ENCODE measurements at regions of chr2 and their contacts with region 1.

Region 1: DNA sequence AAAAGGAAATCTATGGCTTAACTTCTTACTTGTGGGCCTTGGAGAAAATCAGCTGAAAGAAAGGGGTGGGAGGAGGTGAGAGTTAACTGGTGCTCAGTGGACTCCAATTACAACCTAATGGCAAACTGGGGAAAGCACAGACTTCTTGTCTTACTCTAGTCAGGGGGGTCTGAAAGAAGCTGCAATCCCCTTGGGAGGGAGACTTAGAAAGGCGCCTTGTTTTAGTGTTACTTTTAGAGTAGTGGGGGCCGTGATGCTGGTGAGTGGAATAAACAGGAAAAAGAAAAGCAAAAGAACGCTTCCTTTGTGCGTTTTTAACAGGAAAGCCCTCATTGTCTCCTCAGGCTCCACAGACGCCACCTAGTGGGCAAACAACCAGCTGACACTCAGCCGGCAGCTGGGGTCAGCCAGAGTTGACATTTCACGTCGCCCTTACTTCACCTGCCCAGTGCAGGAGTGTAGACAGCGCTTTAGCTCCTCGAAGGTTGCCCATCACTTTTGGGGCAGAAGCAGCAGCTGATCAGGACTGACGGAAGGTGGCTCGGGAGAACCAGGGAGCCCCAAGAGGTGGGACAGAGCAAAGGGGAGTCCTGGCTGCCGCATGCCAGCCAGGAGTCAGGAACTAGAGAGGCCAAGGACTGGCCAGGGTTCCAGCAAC is 55.9 kb upstream of the GORASP2 start:
- DNase-seq: peak; percentile 86
- ATAC-seq: peak; percentile 98
- H3K4me3 Mint-ChIP-seq: peak overlapping the region; percentile 49
- H3K27ac Mint-ChIP-seq: peak overlapping the region; percentile 60
- H3K4me1 Mint-ChIP-seq: peaks cover 10% of the 10 kb centered on the region
- H3K27me3 Mint-ChIP-seq: peaks cover 3% of the 10 kb centered on the region
- CTCF ChIP-seq: peak; percentile 95

Region 2: DNA sequence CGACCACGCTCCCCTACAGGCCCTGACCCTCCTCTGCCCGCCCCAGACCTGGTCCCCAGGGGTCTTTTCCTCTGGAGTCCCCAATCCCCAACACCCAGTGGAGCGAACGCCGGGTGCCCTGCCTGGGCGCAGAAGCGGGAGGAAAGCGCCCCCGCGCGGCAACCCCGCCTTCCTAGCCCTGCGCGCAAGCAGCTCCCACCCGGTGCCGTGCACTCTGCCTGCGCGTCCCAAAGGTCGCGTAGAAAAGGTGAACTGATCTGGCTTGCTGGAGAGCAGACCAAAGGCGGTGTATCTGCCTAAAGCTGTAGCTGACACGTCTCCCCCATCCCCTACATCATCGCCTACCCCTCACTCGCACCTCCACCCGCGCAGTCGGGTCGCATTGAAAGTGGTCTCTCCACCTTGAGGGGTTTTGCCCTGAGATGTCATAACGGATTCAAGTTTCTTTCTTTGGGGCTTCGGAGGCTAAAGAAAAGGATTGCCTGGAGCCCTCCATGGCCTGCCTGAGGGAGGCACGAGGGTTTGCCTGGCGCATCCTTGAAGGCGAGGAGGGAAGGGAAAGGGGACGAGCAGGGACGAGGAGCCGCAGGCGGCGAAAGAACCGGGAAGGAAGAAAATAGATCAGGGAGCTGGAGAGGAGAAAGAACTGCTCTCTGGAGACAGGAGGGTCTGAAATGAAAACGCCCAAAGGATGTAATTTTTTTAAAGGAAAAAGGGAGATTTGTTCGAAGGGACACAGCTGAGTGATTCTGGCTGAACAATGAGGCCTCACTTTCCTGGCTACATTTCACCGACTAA is 50.7 kb before region 1 on chr2:
- CTCF ChIA-PET with region 1: interaction called, 11 read pairs
- POLR2A ChIA-PET with region 1: no interaction called
- intact Hi-C with region 1: loop called (anchors 2 kb)
- DNase-seq: peak; percentile 65
- ATAC-seq: peak; percentile 63
- H3K4me3 Mint-ChIP-seq: peak overlapping the region; percentile 48
- H3K27ac Mint-ChIP-seq: no peak overlapping the region
- H3K4me1 Mint-ChIP-seq: peaks cover 37% of the 10 kb centered on the region
- H3K27me3 Mint-ChIP-seq: peaks cover 75% of the 10 kb centered on the region
- CTCF ChIP-seq: no peak

Region 3: GRCh38 chr2:170843656-170844055 is 29.5 kb before region 1 on chr2:
- CTCF ChIA-PET with region 1: interaction called, 73 read pairs
- POLR2A ChIA-PET with region 1: interaction called, 3 read pairs
- intact Hi-C with region 1: no loop called
- DNase-seq: peak; percentile 39
- ATAC-seq: peak; percentile 79
- H3K4me3 Mint-ChIP-seq: no peak overlapping the region
- H3K27ac Mint-ChIP-seq: peak overlapping the region; percentile 16
- H3K4me1 Mint-ChIP-seq: peaks cover 21% of the 10 kb centered on the region
- H3K27me3 Mint-ChIP-seq: peaks cover 10% of the 10 kb centered on the region
- CTCF ChIP-seq: no peak

Region 4: DNA sequence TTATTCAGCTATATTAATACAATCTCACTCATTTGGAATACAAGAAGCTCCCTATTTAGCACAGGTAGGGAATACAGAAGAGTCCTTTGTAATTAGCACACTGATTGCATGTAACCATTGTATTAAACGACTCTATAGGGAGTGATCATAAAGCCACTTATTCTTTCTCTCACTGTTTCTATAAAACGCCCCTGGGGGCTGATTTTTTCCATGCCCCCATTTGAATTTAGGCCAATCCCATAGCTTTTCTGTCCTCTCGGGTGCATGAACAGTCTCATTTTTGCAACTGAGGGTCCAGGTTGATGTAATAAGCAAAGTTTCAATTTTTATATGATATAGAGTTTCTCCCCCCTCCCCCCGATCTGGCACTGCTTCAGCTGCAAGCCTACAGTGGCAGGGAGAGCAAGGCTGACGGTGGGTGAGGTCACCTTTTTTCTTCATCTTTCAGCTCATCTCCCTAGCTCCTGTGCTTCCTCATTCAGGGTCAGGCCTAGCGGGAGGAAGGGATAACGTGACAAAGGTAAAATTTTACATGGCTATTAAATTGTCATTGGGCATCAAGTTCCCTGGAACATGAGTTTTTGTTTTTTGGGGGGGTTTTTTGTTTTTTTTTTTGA is 10.8 kb before region 1 on chr2:
- CTCF ChIA-PET with region 1: interaction called, 18 read pairs
- POLR2A ChIA-PET with region 1: interaction called, 4 read pairs
- intact Hi-C with region 1: no loop called
- DNase-seq: no peak
- ATAC-seq: no peak
- H3K4me3 Mint-ChIP-seq: no peak overlapping the region
- H3K27ac Mint-ChIP-seq: no peak overlapping the region
- H3K4me1 Mint-ChIP-seq: no peaks in the 10 kb centered on the region
- H3K27me3 Mint-ChIP-seq: no peaks in the 10 kb centered on the region
- CTCF ChIP-seq: no peak

Region 5: DNA sequence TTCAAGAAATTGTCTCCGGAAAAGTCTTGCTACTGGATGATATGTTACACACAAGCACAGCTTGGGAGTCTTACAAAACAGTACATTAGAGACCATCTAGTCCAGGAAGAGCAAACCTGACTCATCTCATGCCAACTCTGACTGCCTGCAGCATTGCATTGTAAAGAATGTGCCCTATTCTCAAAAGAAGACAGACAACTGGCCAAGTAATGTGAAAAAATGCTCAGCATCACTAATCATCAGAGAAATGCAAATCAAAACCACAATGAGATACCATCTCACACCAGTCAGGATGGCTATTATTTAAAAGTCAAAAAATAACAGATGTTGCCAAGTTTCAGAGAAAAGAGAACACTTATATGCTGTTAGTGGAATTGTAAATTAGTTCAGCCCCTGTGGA is 13.2 kb after region 1 on chr2:
- CTCF ChIA-PET with region 1: interaction called, 55 read pairs
- POLR2A ChIA-PET with region 1: interaction called, 3 read pairs
- intact Hi-C with region 1: no loop called
- DNase-seq: no peak
- ATAC-seq: no peak
- H3K4me3 Mint-ChIP-seq: no peak overlapping the region
- H3K27ac Mint-ChIP-seq: no peak overlapping the region
- H3K4me1 Mint-ChIP-seq: no peaks in the 10 kb centered on the region
- H3K27me3 Mint-ChIP-seq: peaks cover 3% of the 10 kb centered on the region
- CTCF ChIP-seq: no peak

Region 6: GRCh38 chr2:170922634-170923494 is 49.7 kb after region 1 on chr2:
- CTCF ChIA-PET with region 1: interaction called, 24 read pairs
- POLR2A ChIA-PET with region 1: no interaction called
- intact Hi-C with region 1: no loop called
- DNase-seq: no peak
- ATAC-seq: no peak
- H3K4me3 Mint-ChIP-seq: no peak overlapping the region
- H3K27ac Mint-ChIP-seq: no peak overlapping the region
- H3K4me1 Mint-ChIP-seq: peaks cover 9% of the 10 kb centered on the region
- H3K27me3 Mint-ChIP-seq: no peaks in the 10 kb centered on the region
- CTCF ChIP-seq: no peak

Region 7: GRCh38 chr2:170928824-170929685 is 55.9 kb after region 1 on chr2 and contains the start of gene GORASP2:
- CTCF ChIA-PET with region 1: interaction called, 24 read pairs
- POLR2A ChIA-PET with region 1: no interaction called
- intact Hi-C with region 1: no loop called
- DNase-seq: peak; percentile 100
- ATAC-seq: peak; percentile 93
- H3K4me3 Mint-ChIP-seq: peak within 1 kb of the TSS; percentile 99
- H3K27ac Mint-ChIP-seq: peak within 1 kb of the TSS; percentile 99
- H3K4me1 Mint-ChIP-seq: peaks cover 45% of the 10 kb centered on the region
- H3K27me3 Mint-ChIP-seq: no peaks in the 10 kb centered on the region
- CTCF ChIP-seq: peak; percentile 96
- total RNA-seq, gene GORASP2: 68.4 to 70.6 TPM

Region 8: DNA sequence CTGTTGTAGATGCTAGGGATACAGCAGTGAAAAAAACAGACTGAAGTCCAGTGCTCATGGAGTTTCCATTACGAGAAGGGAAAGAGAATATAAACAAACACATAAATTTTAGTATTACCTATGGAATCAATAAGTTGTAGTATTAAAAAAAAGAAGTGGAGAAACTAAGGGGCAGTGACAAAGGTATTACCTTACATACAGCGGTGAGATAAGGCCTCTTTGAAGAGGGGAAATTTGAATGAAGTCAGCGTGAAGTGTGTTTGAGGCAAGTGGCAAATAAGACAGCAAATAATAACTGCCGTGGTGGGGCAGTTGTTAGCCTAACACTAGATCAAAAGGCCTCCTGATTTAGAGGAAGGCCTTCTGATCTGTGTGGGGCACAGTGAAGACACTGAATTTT is 229.6 kb after region 1 on chr2:
- CTCF ChIA-PET with region 1: no interaction called
- POLR2A ChIA-PET with region 1: no interaction called
- intact Hi-C with region 1: no loop called
- DNase-seq: no peak
- ATAC-seq: peak; percentile 51
- H3K4me3 Mint-ChIP-seq: no peak overlapping the region
- H3K27ac Mint-ChIP-seq: peak overlapping the region; percentile 49
- H3K4me1 Mint-ChIP-seq: peaks cover 37% of the 10 kb centered on the region
- H3K27me3 Mint-ChIP-seq: no peaks in the 10 kb centered on the region
- CTCF ChIP-seq: no peak

Measured in activated CD8-positive, alpha-beta T cell treated with anti-CD3 and anti-CD28 coated beads for 36 hours (primary cell).